ENCODE measurements at regions of chr11 and their contacts with region 1.

Region 1: DNA sequence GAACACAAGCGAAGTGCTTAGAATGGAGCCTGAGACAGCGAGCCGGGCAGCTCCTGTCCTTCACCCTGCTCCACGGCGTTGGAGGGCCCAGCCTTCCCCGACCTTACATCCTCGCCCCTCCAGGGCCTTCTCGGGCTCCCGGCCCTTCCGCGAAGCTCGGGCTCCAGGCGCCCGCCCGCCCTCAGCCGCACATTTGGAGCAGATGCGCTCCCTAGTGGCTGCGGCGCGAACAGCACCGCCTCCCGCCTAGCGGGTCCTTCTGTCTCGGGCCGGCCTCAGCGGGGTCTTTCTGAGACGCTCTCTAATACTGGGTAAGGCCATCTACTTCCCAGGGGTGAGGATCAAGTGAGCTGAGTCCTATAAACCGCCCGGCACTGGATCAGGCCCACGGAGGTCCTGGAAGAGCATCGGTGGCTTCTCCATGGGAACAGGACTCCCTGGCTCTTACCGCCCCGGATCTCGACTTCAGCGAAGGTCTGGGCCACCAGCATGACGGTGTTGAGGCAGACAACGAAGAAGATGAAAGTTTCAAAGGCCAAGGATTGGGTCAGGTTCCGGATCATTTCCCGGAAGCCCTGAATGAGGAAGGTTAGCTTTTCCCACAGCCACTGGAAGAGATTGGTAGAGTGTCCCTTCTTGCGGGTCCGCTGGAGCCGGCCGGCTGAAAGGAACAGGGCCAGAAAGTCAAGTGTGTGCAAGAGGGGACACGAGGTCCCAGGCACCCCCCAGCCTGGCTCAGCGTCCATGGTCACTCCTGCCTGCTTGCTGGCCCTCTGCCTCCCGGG is 3.7 kb downstream of the CATSPER1 start:
- DNase-seq: no peak
- H3K4me3 ChIP-seq: no peak overlapping the region
- CTCF ChIP-seq: peak; percentile 97

Region 2: DNA sequence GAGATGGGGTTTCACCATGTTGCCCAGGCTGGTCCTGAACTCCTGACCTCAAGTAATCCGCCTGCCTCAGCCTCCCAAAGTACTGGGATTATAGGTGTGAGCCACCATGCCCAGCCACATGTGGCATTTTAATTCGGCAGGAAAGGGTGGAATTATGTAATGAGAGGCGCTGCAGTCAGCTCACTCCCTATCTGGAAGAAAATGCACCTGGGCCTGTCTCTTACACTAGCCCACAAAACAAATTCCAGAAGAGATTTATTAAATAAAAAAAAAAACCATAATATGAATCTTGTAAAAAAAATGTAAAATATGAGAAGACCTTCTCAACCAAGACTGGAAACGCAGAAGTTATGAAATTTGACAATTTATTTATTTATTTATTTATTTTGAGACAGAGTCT is 318.7 kb before region 1 on chr11:
- CTCF ChIA-PET with region 1: interaction called, 11 read pairs
- POLR2A ChIA-PET with region 1: no interaction called
- DNase-seq: no peak
- H3K4me3 ChIP-seq: no peak overlapping the region
- CTCF ChIP-seq: no peak

Region 3: DNA sequence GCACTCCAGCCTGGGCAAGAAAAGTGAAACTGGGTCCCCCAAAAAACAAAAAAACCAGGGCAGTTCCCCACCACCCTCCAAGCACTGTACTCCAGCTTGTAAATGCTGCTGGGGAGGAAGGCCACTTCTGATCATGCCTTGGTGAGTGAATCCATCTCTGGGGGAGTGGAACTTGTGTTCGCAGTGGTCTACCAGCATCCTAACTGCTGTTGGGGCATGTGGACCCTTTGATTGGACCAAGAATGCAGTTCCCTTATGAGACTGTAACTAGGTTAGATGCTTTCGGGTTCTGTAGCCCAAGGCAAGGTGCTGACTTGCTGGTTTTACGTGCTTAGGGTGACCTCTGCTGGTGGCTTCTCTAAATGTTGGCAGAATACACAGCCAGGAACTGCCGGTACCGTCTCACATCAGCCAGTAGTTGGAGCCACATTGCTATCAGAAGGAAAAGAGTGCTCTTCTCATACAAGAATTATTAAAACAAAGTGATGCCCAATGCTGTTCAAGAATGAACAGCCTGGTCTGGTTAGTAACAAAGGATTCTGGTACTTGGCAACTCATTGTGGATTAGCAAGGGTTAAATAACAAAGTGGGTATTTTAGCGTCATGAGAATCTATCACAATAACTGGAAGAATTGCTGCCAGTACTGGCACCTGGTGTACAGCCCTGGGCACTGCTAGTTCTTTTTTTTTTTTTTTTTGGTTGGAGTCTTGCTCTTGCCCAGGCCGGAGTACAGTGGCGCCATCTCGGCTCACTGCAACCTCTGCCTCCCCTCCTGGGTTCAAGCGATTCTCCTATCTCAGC is 33.6 kb before region 1 on chr11:
- CTCF ChIA-PET with region 1: interaction called, 36 read pairs
- POLR2A ChIA-PET with region 1: no interaction called
- DNase-seq: peak; percentile 79
- H3K4me3 ChIP-seq: no peak overlapping the region
- CTCF ChIP-seq: peak; percentile 94

Region 4: DNA sequence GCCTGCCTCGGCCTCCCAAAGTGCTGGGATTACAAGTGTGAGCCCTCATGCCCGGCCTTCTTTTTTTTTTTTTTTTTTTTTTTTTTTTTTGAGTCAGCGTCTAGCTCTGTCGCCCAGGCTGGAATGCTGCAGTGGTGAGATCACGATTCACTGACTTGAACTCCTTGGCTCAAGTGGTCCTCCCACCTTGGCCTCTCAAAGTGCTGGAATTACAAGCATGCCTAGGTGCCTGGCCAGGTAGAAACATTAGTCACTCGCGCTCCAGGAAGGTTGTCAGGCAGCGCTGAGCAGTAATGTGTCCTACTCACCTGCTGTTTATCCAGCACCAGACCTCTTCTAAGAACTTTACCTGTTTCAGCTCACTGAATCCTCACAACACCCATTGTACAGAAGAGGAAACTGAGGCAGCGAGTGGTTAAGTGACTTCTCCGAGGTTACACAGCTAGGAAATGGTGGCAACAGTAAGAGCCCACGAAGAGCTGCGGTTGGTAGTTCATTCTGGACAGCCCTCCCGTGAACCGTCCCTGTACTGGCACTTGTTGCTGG is 11.3 kb before region 1 on chr11:
- CTCF ChIA-PET with region 1: interaction called, 72 read pairs
- POLR2A ChIA-PET with region 1: no interaction called
- DNase-seq: no peak
- H3K4me3 ChIP-seq: no peak overlapping the region
- CTCF ChIP-seq: no peak

Region 5: GRCh38 chr11:66045177-66045639 is 22.6 kb after region 1 on chr11:
- CTCF ChIA-PET with region 1: interaction called, 118 read pairs
- POLR2A ChIA-PET with region 1: no interaction called
- DNase-seq: no peak
- H3K4me3 ChIP-seq: no peak overlapping the region
- CTCF ChIP-seq: peak; percentile 93

Region 6: DNA sequence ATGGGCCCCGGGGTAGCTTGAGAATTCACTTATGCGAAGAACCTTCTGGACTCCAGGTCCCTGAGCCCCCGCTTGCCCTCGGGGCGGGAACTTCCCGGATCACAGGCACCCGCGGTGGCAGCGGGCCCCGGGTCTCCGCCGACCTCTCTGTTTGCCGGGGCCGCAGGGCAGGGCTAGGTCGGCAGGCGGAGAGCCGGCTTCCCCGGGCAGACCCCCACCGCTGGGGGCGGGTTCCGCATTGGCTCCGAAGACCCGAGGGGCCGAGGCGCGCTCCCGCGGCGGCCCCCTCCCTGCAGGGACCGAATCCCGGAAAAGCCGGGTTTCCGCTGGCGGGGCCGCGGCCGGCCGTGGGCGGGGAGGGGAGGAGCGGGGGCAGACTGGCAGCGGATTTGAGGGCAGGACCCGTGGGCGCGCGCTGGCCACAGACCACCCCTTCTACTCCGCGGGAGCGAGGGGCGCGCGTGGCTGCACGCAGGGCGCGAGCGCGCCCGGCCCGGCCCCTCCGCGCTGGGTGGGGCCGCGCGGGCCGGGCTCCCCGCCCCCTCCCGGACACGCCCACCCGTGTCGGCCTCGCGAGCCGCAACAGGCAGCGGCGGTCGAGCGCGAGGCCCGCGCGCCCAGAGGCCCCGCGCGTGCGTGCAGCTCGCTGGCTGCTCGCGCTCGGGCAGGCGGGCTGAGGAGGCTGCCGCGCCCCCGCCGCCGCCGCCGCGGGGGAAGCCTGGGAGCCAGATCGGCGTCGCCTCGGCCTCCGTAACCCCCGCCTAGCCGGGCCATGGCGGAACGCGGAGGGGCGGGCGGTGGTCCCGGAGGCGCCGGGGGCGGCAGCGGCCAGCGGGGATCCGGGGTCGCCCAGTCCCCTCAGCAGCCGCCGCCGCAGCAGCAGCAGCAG is 47.4 kb after region 1 on chr11 and contains the start of gene PACS1:
- CTCF ChIA-PET with region 1: interaction called, 13 read pairs
- POLR2A ChIA-PET with region 1: no interaction called
- DNase-seq: no peak
- H3K4me3 ChIP-seq: peak within 1 kb of the TSS; percentile 81
- CTCF ChIP-seq: no peak